WTC11 (cell line): ENCODE measurements at regions of chr4 and their contacts with region 1.

Region 1: GRCh38 chr4:154642373-154643009 is 30.0 kb upstream of the FGG start:
- DNase-seq: no peak
- ATAC-seq: peak; percentile 82
- H3K4me3 Mint-ChIP-seq: no peak overlapping the region
- H3K27ac Mint-ChIP-seq: no peak overlapping the region
- H3K4me1 Mint-ChIP-seq: peaks cover 12% of the 10 kb centered on the region
- H3K27me3 Mint-ChIP-seq: no peaks in the 10 kb centered on the region
- CTCF ChIP-seq: no peak

Region 2: DNA sequence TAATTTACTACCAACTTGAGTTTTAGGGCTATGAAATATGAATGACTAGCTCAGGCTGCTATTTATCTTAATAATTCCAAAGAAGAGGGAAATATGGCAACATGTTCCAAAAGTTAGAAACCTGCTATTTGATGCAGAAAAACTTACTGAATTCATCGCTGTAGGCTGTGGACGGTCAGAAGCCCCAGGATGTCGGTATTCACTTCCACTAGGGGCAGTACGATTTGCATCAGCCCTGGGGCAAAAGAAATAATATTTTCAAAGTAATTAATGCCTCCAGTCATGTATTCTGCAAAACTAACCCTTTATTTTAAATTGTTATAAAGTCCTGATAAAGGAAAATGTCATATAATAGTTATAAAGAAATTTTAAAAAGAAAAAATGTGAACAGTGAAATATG is 96.8 kb before region 1 on chr4:
- CTCF ChIA-PET with region 1: no interaction called
- POLR2A ChIA-PET with region 1: no interaction called
- DNase-seq: no peak
- ATAC-seq: no peak
- H3K4me3 Mint-ChIP-seq: no peak overlapping the region
- H3K27ac Mint-ChIP-seq: no peak overlapping the region
- H3K4me1 Mint-ChIP-seq: peaks cover 9% of the 10 kb centered on the region
- H3K27me3 Mint-ChIP-seq: no peaks in the 10 kb centered on the region
- CTCF ChIP-seq: no peak

Region 3: DNA sequence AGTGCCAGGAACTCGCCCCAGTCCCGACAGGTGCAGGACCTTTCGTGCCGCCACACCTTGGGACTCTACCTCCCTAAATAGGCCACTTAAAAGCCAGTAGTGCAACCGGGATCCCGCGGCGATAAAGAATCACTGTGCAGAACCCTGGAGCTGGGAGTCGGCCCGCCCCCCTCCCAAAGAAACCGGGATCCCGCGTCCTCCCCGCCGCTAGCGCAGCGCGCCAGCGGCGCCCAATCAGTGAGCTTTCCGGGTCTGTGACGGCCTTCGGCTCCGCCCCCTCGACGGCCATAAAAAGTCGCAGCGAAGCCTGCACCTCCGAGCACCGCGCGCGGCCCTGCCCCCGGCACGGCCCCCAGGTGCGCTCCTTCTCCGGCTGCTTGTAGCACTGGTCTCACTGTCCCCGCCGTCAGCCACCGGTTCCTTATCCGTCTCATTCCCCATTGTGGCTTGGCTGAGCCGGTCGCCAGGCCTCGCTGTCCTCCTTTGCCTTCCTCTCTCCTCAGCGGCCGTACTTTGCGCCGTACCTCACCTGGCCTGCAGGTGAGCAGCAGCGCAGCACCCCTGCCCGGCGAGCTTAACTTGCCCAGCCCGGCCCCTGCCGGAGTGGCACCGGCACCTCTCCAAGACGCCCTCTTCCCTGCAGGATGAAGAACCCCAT is 101.3 kb after region 1 on chr4 and contains the start of gene LRAT:
- CTCF ChIA-PET with region 1: interaction called, 15 read pairs
- POLR2A ChIA-PET with region 1: no interaction called
- DNase-seq: peak; percentile 90
- ATAC-seq: peak; percentile 76
- H3K4me3 Mint-ChIP-seq: peak within 1 kb of the TSS; percentile 95
- H3K27ac Mint-ChIP-seq: peak within 1 kb of the TSS; percentile 89
- H3K4me1 Mint-ChIP-seq: peaks cover 62% of the 10 kb centered on the region
- H3K27me3 Mint-ChIP-seq: peaks cover 38% of the 10 kb centered on the region
- CTCF ChIP-seq: peak; percentile 33
- total RNA-seq, gene LRAT: 33.0 to 37.7 TPM (median 34.5 TPM) in 3 replicates